ENCODE measurements at regions of chr2 and their contacts with region 1.

Region 1: DNA sequence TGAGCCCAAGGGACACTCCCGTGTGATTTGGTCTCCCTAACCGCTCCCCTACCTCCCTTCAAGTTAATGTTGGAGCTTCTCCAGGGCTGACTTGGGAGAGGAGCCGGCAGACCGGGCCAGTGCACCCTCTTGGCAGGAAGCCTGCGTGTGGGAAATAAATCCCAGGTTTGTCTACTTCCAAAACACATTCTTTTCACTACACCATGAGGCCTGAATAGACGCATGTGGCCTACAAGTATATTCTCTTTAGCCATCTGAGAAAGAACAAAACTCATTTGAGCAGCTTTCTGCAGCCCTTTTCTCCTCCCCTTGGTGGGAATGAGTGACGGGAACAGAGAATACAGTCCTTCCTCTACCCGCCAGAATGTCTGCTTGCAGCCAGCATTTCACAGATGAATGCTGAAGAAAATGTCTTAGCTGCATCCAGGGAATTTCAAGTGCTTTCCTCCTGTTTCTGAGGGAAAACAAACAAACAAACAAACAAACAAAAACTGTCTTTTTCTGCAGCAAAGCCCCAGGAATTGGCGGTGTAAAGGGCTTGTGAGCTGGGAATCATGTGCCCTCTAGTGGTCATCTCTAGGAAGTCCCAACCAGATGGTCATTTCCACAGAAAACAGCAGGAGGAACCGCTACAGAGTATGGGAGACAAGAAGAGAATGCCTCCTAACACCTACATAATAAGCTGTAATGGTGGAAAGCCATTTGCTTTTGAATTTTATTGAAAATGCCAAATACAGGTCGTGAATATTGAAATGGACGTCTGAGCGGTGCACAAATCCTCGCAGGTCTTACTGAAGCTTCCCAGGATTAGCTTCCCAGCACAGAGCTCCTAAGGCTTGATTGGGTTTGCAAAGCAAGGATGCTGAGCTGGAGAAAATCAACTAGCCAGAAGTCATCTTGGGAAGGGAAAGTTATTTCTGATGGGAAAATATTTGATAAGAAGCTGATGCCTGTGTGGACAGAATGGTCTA is 41.2 kb upstream of the DAPL1 start:
- DNase-seq: peak; percentile 78
- H3K4me3 ChIP-seq: no peak overlapping the region
- H3K27ac ChIP-seq: no peak overlapping the region
- H3K4me1 ChIP-seq: no peaks in the 10 kb centered on the region
- H3K27me3 ChIP-seq: peaks cover 13 to 31% of the 10 kb centered on the region in 2 experiments
- CTCF ChIP-seq: peak; percentile 77 to 92
- POLR2A ChIP-seq: no peak

Region 2: GRCh38 chr2:158034199-158034866 is 719.6 kb before region 1 on chr2:
- CTCF ChIA-PET with region 1: interaction called, 105 read pairs
- POLR2A ChIA-PET with region 1: no interaction called
- dilution Hi-C with region 1: no loop called
- intact Hi-C with region 1: loop called (anchors 1 kb)
- DNase-seq: peak; percentile 51
- H3K4me3 ChIP-seq: no peak overlapping the region
- H3K27ac ChIP-seq: no peak overlapping the region
- H3K4me1 ChIP-seq: no peaks in the 10 kb centered on the region
- H3K27me3 ChIP-seq: peaks cover 13 to 23% of the 10 kb centered on the region in 2 experiments
- CTCF ChIP-seq: peak; percentile 34 to 45
- POLR2A ChIP-seq: no peak

Region 3: GRCh38 chr2:158179660-158180059 is 574.3 kb before region 1 on chr2:
- CTCF ChIA-PET with region 1: interaction called, 101 read pairs
- POLR2A ChIA-PET with region 1: no interaction called
- dilution Hi-C with region 1: no loop called
- intact Hi-C with region 1: loop called (anchors 1 kb)
- DNase-seq: peak; percentile 48
- H3K4me3 ChIP-seq: no peak overlapping the region
- H3K27ac ChIP-seq: no peak overlapping the region
- H3K4me1 ChIP-seq: no peaks in the 10 kb centered on the region
- H3K27me3 ChIP-seq: peaks cover 14 to 22% of the 10 kb centered on the region in 2 experiments
- CTCF ChIP-seq: peak in 1 of 2 donors; percentile 27
- POLR2A ChIP-seq: no peak

Region 4: GRCh38 chr2:158507166-158507565 is 246.8 kb before region 1 on chr2:
- CTCF ChIA-PET with region 1: no interaction called
- POLR2A ChIA-PET with region 1: no interaction called
- dilution Hi-C with region 1: no loop called
- intact Hi-C with region 1: no loop called
- DNase-seq: no peak
- H3K4me3 ChIP-seq: no peak overlapping the region
- H3K27ac ChIP-seq: no peak overlapping the region
- H3K4me1 ChIP-seq: no peaks in the 10 kb centered on the region
- H3K27me3 ChIP-seq: no peaks in the 10 kb centered on the region
- CTCF ChIP-seq: no peak
- POLR2A ChIP-seq: no peak

Region 5: DNA sequence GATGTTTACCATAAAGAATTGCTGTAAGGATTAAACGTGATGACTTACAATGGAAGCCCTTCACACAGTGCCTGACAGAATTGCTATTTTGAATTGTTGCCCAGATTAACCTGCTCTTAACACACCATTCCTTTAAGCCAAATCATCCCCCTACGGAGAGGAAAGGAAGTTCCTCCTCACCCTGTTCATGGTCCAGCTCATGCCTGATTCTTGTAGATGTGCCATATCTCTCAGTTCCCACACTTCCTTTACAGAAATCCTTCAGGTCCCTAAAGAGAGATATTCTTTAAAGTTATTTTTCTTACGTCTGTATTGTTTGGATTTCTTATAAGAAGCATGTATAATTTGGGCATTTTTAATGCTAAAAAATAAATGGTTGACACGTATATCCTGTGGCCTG is 86.3 kb before region 1 on chr2:
- CTCF ChIA-PET with region 1: interaction called, 11 read pairs
- POLR2A ChIA-PET with region 1: no interaction called
- dilution Hi-C with region 1: no loop called
- intact Hi-C with region 1: no loop called
- DNase-seq: peak; percentile 97
- H3K4me3 ChIP-seq: peak overlapping the region in 1 of 3 experiments; percentile 30
- H3K27ac ChIP-seq: peak overlapping the region; percentile 82
- H3K4me1 ChIP-seq: peaks cover 34% of the 10 kb centered on the region
- H3K27me3 ChIP-seq: no peaks in the 10 kb centered on the region
- CTCF ChIP-seq: no peak
- POLR2A ChIP-seq: peak; percentile 61